H1 (cell line): ENCODE measurements at regions of chr17 and their contacts with region 1.

Region 1: GRCh38 chr17:59521204-59522126 is 43.9 kb upstream of the DHX40 start:
- DNase-seq: peak; percentile 38 to 89
- H3K4me3 ChIP-seq: no peak overlapping the region
- H3K27ac ChIP-seq: no peak overlapping the region
- H3K4me1 ChIP-seq: no peaks in the 10 kb centered on the region
- H3K27me3 ChIP-seq: no peaks in the 10 kb centered on the region; a peak in 1 of 7 replicates
- CTCF ChIP-seq: peak; percentile 79 to 91 (median 89)
- EP300 ChIP-seq: no peak
- POLR2A ChIP-seq: no peak
- RAD21 ChIP-seq: peak; percentile 87 to 91

Region 2: DNA sequence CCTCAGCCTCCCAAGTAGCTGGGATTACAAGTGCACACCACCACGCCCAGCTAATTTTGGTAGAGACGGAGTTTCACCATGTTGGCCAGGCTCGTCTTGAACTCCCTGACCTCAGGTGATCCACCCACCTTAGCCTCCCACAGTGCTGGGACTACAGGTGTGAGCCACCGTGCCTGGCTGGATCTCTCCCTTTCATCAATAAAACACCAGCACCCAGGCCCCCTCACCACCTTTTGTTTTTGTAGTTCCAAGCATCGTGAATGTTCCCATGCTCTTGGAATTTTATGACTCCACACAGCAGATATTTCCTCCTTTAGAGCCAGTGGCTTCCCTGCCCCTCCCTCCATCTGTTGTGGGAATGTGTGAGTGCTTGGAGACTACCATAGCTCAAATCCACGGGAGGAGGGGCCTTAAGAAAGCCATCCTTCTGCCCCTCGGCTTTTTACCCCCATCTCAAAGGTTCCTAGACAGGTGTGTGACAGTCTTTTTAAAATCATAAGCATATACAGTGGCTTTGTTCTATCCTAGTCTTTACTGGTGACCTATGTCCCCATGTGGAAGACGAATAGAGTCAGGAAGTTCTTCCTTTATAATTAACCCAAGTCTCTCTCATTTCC is 142.9 kb before region 1 on chr17:
- CTCF ChIA-PET with region 1: no interaction called
- POLR2A ChIA-PET with region 1: no interaction called
- DNase-seq: no peak
- H3K4me3 ChIP-seq: no peak overlapping the region
- H3K27ac ChIP-seq: no peak overlapping the region
- H3K4me1 ChIP-seq: peaks cover 0 to 1% (median 0%) of the 10 kb centered on the region in 4 experiments; a peak in 1 of 7 replicates
- H3K27me3 ChIP-seq: no peaks in the 10 kb centered on the region
- CTCF ChIP-seq: no peak
- EP300 ChIP-seq: no peak
- POLR2A ChIP-seq: no peak
- RAD21 ChIP-seq: no peak

Region 3: GRCh38 chr17:59496178-59496577 is 25.3 kb before region 1 on chr17:
- CTCF ChIA-PET with region 1: no interaction called
- POLR2A ChIA-PET with region 1: no interaction called
- DNase-seq: no peak
- H3K4me3 ChIP-seq: no peak overlapping the region
- H3K27ac ChIP-seq: no peak overlapping the region
- H3K4me1 ChIP-seq: no peaks in the 10 kb centered on the region
- H3K27me3 ChIP-seq: no peaks in the 10 kb centered on the region
- CTCF ChIP-seq: no peak
- EP300 ChIP-seq: no peak
- POLR2A ChIP-seq: no peak
- RAD21 ChIP-seq: no peak

Region 4: DNA sequence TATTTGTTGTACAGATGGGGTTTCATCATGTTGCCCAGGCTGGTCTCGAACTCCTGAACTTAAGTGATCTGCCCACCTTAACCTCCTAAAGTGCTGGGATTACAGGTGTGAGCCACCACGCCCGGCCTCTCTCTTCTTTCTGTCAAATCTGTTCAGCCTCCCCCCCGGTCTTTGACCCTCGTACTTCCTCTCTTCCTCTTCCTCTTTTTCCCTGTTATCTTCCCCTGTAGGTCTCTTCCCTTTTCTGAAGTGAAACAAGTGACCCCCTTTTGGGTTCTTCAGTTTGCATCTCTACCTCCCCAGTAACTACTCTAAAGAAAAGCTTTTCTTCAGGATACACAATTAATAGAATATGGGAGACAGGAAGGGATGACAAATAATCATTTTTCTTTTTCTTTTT is 12.3 kb after region 1 on chr17:
- CTCF ChIA-PET with region 1: interaction called, 16 read pairs
- POLR2A ChIA-PET with region 1: interaction called, 3 read pairs
- DNase-seq: peak in 1 of 2 experiments; percentile 23
- H3K4me3 ChIP-seq: no peak overlapping the region
- H3K27ac ChIP-seq: no peak overlapping the region
- H3K4me1 ChIP-seq: no peaks in the 10 kb centered on the region
- H3K27me3 ChIP-seq: no peaks in the 10 kb centered on the region
- CTCF ChIP-seq: no peak
- EP300 ChIP-seq: no peak
- POLR2A ChIP-seq: no peak
- RAD21 ChIP-seq: no peak

Region 5: GRCh38 chr17:59561042-59561441 is 39.6 kb after region 1 on chr17:
- CTCF ChIA-PET with region 1: interaction called, 31 read pairs
- POLR2A ChIA-PET with region 1: no interaction called
- DNase-seq: no peak
- H3K4me3 ChIP-seq: no peak overlapping the region
- H3K27ac ChIP-seq: no peak overlapping the region
- H3K4me1 ChIP-seq: no peaks in the 10 kb centered on the region
- H3K27me3 ChIP-seq: peaks cover 7 to 13% (median 11%) of the 10 kb centered on the region in 4 experiments
- CTCF ChIP-seq: peak in 2 of 3 experiments; percentile 20 to 55; a peak in 2 of 4 replicates
- EP300 ChIP-seq: no peak
- POLR2A ChIP-seq: no peak
- RAD21 ChIP-seq: peak in 1 of 2 experiments; percentile 15; a peak in 2 of 4 replicates